Upper lobe of right lung (tissue), 1 donor: ENCODE measurements at regions of chr18 and their contacts with region 1.

Region 1: GRCh38 chr18:37385846-37386778 is 179.5 kb downstream of the CELF4 start:
- DNase-seq: no peak
- ATAC-seq: no peak
- H3K4me3 ChIP-seq: no peak overlapping the region
- H3K27ac ChIP-seq: no peak overlapping the region
- H3K4me1 ChIP-seq: no peaks in the 10 kb centered on the region
- H3K27me3 ChIP-seq: no peaks in the 10 kb centered on the region
- CTCF ChIP-seq: peak; percentile 74

Region 2: DNA sequence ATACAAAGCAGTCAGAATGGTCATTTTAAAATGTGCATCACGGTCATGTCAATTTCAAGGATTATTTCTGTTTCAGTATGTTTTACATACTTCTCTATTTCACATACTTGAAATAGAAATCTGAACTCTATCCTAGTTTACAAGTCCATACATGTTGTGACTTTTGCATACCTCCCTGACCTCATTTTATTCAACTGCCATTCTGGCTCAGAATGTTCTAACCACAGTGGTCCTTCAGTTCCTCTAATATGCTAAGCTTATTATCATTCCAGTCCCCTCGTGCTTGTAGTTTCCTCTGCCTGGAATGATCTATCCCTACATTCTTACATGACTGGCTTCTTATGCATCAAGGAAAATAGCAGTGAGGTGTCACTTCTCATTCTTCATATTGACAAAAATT is 261.6 kb before region 1 on chr18:
- intact Hi-C with region 1: no loop called
- DNase-seq: no peak
- ATAC-seq: no peak
- H3K4me3 ChIP-seq: no peak overlapping the region
- H3K27ac ChIP-seq: no peak overlapping the region
- H3K4me1 ChIP-seq: no peaks in the 10 kb centered on the region
- H3K27me3 ChIP-seq: no peaks in the 10 kb centered on the region
- CTCF ChIP-seq: no peak

Region 3: DNA sequence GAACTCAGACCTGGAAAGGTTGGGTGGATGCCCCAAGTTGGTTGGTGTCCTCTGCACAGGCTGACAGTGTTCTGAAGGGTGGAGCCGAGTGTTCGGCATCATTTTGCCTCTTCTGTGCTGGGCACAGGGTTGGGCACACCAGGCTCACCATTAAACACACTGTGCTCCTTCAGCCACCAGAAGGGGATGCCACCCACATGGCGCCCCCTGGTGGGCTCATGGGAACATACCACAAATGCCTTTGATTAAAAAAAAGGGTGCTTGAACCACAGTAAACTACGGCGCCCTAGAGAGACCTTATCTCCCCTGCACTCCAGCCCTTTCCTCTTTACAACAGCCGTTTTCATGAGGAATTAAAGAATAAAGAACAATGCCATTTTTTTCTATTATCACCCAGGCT is 90.1 kb after region 1 on chr18:
- intact Hi-C with region 1: loop called (anchors 10 kb)
- DNase-seq: no peak
- ATAC-seq: peak; percentile 17
- H3K4me3 ChIP-seq: no peak overlapping the region
- H3K27ac ChIP-seq: no peak overlapping the region
- H3K4me1 ChIP-seq: no peaks in the 10 kb centered on the region
- H3K27me3 ChIP-seq: no peaks in the 10 kb centered on the region
- CTCF ChIP-seq: peak; percentile 50